Ascending aorta (tissue), 2 donors: ENCODE measurements at regions of chr19 and their contacts with region 1.

Region 1: DNA sequence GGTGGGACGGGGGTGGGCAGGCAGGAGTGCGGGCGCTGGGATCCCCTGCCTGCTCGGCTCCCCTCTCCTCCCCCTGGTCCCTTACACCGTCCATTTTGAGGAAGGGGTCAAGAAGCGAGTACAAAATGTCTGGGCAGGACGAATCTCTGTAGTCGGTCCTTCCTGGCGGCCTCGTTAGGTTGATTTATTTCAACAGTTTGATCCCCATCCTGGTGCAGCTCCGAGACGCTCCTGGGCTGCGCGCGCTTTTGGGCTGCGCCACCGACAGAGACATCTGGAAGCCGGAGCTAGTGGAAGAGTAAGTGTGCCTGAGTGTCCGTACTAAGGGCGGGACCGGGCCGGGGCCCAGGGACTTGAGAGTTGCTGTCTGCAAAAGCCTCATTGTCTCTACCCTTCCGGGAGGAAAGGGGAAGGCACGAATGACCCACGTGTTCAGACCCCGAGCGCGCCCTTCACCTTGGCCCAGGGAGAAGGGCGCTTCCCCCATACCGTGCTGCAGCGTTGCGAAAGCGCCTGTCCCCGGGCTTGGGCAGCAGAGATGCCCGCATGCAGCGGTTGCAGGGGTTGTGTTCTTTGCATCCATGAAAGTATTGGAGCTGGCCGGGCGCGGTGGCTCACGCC is 1.8 kb downstream of the ZNF114 start:
- DNase-seq: peak in 1 of 2 donors; percentile 52
- H3K4me3 ChIP-seq: peak overlapping the region; percentile 43 to 62
- H3K27ac ChIP-seq: no peak overlapping the region
- H3K4me1 ChIP-seq: peaks cover 0 to 4% of the 10 kb centered on the region in 2 donors
- H3K27me3 ChIP-seq: no peaks in the 10 kb centered on the region
- CTCF ChIP-seq: no peak

Region 2: DNA sequence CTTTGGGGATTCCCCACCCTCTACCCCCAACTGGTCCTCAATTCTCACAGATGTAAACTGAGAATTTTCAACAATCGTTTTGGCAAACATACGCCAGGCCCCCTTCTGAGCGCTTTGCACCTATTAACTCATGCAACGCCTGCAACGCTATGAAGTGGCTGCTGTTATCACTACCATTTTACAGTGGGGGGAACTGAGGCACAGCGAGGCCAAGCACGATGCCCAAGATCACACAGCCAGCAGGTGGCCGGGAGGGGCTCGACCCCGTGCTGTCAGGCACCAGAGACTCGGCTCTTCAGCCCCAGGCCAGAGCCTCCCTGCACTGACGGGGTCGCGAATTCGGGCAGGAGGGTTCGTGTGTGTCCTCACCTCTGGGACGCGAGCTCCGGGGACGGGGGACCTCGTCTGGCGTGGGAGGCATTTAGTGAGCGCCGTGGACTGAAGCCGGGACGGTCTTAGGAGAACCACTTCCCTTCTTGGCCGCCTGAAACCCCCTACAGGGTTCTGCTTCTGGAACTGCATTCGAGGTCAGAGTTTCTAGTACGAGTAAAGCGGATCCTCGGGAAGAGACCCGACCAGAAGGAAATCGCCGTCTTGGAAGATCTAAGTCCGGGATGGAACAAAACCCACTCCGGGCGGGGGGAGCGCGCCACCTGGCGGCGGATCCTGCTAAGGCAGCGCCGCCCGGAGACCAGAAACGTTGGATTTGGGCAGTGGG is 19.3 kb after region 1 on chr19:
- intact Hi-C with region 1: loop called (anchors 1 kb)
- DNase-seq: peak in 1 of 2 donors; percentile 86
- H3K4me3 ChIP-seq: peak overlapping the region; percentile 45 to 59
- H3K27ac ChIP-seq: no peak overlapping the region
- H3K4me1 ChIP-seq: peaks cover 7 to 8% of the 10 kb centered on the region in 2 donors
- H3K27me3 ChIP-seq: no peaks in the 10 kb centered on the region
- CTCF ChIP-seq: peak; percentile 94 to 98 (median 96)

Region 3: DNA sequence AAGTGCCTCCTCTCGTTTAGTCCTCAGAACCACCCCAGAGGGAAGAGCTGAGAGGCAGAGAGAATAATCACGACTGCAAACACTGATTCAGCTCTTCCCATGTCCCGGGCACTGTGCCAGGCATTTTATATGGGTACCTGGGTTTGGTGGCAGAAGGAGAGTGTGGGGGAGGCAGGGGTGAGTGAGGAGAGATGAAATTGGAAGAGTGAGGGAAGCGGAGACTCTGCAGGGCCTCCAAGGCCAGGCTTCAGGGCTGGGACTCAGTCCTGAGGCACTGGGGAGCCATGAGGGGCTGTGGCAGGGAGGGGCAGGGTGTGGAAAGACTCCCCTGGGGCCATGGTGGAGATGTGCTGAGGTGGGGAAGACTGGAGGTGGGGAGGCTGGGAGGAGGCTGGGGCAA is 101.3 kb after region 1 on chr19:
- intact Hi-C with region 1: no loop called
- DNase-seq: no peak
- H3K4me3 ChIP-seq: no peak overlapping the region
- H3K27ac ChIP-seq: no peak overlapping the region
- H3K4me1 ChIP-seq: no peaks in the 10 kb centered on the region
- H3K27me3 ChIP-seq: no peaks in the 10 kb centered on the region
- CTCF ChIP-seq: no peak

Region 4: DNA sequence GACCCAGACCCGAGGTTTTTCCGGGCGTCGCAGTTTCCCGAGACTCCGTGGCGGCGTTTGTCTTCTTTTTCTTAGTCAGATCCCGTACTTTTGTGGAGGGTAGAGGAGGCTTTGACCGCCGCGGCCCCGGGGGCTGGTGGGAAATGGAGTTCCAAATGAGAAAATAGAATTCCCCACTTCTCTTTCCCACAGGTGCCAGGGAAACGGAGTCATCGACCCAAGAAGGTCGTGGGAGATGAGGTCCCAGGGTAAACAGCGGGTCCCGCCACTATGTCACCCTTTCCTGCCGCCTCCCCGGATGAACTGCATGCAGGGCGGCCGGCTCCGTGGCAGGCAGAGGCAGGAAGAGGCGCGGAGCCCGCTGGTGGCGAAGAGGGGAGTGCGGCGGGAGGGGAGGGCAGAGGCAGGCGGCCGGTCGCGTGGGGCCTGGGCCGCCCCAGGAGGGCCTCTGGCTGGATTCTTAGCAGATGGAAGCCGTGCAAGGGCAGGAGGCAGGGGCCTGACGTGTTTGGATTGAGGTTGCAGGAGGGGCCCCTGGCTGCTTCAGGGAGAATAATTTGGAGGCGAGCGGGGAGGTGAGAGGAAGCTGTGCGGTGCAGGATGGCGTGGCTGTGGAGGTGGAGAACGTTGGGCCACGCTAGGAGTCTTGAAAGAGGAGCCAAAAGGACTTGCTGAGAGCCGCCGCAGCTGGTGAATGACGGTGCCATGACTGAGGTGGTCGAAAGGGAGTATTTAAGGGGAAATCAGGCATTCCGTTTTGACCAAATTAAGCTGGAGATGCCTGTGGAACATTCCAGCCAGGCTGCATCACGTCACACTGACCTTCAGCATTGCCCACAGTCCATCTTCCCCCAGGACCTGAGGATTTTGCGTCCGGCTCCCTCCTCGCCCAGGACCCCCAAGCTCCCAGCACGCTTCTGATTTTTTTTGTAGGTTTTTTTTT is 209.2 kb after region 1 on chr19:
- intact Hi-C with region 1: no loop called
- DNase-seq: no peak
- H3K4me3 ChIP-seq: peak overlapping the region; percentile 64 to 76
- H3K27ac ChIP-seq: peak overlapping the region; percentile 94 to 96
- H3K4me1 ChIP-seq: peaks cover 8 to 9% of the 10 kb centered on the region in 2 donors
- H3K27me3 ChIP-seq: no peaks in the 10 kb centered on the region
- CTCF ChIP-seq: peak in 1 of 3 experiments; percentile 7